Activated B cell treated with CpG ODN at 0.5 μM for 24 hours (primary cell): ENCODE measurements at regions of chr11 and their contacts with region 1.

Region 1: GRCh38 chr11:134253188-134253993 is at the starts of genes ACAD8 and THYN1:
- DNase-seq: peak; percentile 89
- ATAC-seq: peak; percentile 100
- H3K4me3 Mint-ChIP-seq: peak within 1 kb of the TSS; percentile 95
- H3K27ac Mint-ChIP-seq: peak within 1 kb of the TSS; percentile 77
- H3K4me1 Mint-ChIP-seq: peaks cover 22% of the 10 kb centered on the region
- H3K27me3 Mint-ChIP-seq: no peaks in the 10 kb centered on the region
- CTCF ChIP-seq: no peak
- total RNA-seq, gene ACAD8: 20.1 and 23.1 TPM in 2 replicates
- total RNA-seq, gene THYN1: 27.7 and 30.6 TPM in 2 replicates

Region 2: DNA sequence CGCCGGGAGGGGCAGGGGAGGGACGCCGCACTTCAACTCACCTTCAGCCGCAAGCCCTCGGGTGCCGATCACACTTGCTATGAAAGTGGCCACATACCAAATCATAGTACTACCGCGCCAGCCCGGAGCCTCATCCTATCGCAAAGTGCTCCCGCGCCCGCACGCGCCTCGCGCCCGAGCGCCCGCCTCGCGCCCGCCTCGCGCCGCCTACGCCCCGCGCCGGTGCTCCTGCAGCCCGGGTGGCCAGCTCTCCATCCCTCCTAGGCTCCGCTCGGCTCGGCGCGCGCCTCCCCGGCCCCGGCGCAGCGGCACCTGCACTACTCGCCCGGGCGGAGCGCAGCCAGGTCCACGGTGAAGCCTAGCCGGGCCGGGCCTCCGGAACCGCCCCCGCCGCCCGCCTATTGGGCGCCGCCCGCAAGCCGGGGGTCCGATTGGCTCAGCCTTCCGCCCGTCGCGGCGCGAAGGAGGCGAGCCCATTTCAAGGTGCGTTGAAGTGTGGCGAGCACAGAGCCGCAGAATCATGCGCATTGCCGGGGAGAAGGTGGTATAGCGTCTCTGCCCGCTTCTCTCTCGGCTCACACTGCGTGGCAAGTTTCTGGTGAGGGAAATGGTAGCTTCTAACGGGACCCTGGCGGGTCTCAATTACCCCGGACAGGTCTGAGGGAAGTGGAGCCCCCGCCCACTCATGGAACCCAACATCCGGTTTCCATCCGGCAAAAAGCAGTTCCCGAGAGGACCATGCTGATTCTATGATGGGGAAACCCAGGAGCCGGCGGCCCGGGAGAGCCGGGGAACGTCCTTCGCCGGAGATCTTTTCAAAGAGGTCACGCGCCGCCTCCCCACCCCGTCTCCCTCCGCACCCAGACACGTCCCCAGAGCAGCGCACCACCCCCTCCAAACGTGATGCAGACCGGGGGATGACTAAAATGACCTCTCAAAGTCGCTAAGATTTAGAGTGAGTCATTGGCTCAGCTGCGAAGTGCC is 296.4 kb before region 1 on chr11 and contains the start of gene IGSF9B:
- CTCF ChIA-PET with region 1: no interaction called
- POLR2A ChIA-PET with region 1: no interaction called
- intact Hi-C with region 1: loop called (anchors 1 kb)
- DNase-seq: peak; percentile 71
- ATAC-seq: peak; percentile 95
- H3K4me3 Mint-ChIP-seq: peak within 1 kb of the TSS; percentile 83
- H3K27ac Mint-ChIP-seq: peak within 1 kb of the TSS; percentile 30
- H3K4me1 Mint-ChIP-seq: peaks cover 17% of the 10 kb centered on the region
- H3K27me3 Mint-ChIP-seq: peaks cover 46% of the 10 kb centered on the region
- CTCF ChIP-seq: no peak
- total RNA-seq, gene IGSF9B: 0.83 and 2.0 TPM in 2 replicates

Region 3: GRCh38 chr11:134068829-134069425 is 184.5 kb before region 1 on chr11 and contains the start of gene JAM3:
- CTCF ChIA-PET with region 1: no interaction called
- POLR2A ChIA-PET with region 1: no interaction called
- intact Hi-C with region 1: loop called (anchors 1 kb)
- DNase-seq: peak; percentile 99
- ATAC-seq: peak; percentile 88
- H3K4me3 Mint-ChIP-seq: peak within 1 kb of the TSS; percentile 95
- H3K27ac Mint-ChIP-seq: peak within 1 kb of the TSS; percentile 90
- H3K4me1 Mint-ChIP-seq: peaks cover 42% of the 10 kb centered on the region
- H3K27me3 Mint-ChIP-seq: peaks cover 11% of the 10 kb centered on the region
- CTCF ChIP-seq: no peak
- total RNA-seq, gene JAM3: 16.2 and 17.6 TPM in 2 replicates

Region 4: DNA sequence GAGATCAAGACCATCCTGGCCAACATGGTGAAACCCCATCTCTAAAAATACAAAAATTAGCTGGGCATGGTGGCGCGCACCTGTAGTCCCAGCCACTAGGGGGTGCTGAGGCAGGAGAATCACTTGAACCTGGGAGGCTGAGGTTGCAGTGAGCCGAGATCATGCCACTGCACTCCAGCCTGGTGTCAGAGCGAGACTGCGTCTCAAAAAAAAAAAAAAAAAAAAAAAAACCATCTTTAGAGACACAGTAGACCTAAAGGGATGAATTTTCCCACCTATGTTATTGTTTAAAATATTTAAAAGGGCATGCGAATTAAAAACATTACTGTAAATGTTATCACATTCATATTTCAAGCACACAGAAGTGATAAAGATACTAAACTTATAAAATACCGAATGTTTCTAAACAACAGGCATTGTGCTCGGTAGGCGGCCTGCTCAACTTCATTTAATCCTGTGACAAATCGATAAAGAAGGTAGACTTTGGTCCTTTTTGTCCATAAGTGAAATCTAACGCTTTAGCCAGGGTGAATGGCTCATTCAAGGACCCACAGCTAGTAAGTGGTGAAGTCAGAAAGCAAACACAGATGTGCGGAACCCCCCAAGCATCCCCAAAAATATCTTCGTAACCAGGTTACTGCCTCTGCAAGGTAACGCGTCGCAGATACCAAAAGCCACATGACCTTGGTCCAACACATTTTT is 45.7 kb before region 1 on chr11:
- CTCF ChIA-PET with region 1: interaction called, 4 read pairs
- POLR2A ChIA-PET with region 1: no interaction called
- intact Hi-C with region 1: loop called (anchors 2 kb)
- DNase-seq: peak; percentile 40
- ATAC-seq: no peak
- H3K4me3 Mint-ChIP-seq: no peak overlapping the region
- H3K27ac Mint-ChIP-seq: no peak overlapping the region
- H3K4me1 Mint-ChIP-seq: no peaks in the 10 kb centered on the region
- H3K27me3 Mint-ChIP-seq: no peaks in the 10 kb centered on the region
- CTCF ChIP-seq: peak; percentile 39

Region 5: DNA sequence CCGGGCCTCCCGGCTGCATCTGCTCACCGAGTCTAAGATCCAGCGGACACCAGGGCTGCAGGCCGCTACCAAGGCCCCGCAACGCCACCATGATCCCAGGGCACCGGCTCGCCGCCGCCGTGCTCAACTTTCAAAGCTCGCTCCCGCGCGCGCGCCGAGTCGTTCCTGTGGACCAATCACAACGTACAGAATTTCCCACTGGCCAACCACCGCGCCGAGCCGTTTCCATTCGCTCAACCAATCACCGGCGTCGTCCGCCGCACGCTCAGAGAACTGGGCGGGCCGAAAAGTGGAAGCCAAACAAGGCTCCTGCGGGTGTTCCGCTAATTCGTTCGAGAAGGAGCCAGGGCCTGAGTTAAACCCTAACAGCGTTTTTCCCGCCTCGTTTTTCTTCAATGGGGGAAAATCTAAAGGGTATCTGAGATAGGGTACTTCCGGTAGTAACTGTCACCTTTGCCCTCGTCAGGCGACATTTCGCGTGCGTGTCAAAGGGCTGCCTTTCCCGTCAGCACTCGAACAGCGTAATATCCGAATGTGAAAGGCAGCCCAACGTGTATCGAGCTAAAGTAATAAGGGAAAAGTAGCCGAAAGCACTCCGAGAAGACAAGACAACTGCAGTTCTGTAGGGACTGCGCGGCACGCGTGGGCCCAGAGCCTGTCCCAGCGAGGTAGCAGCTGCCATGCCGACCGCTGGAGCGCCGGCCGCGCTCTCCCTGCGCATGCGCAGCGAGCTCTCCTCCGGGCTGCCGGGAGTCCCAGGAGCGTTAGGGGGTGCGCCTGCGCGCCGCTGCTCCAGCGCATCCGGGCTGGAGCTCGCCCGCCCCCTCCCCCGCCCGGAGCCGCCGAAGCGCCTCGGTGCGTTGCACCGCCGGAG is 29.3 kb before region 1 on chr11 and contains the starts of genes NCAPD3 and VPS26B:
- CTCF ChIA-PET with region 1: no interaction called
- POLR2A ChIA-PET with region 1: interaction called, 37 read pairs
- intact Hi-C with region 1: loop called (anchors 1 kb)
- DNase-seq: peak; percentile 89
- ATAC-seq: peak; percentile 80
- H3K4me3 Mint-ChIP-seq: peak within 1 kb of the TSS; percentile 93
- H3K27ac Mint-ChIP-seq: peak within 1 kb of the TSS; percentile 97
- H3K4me1 Mint-ChIP-seq: peaks cover 45% of the 10 kb centered on the region
- H3K27me3 Mint-ChIP-seq: peaks cover 7% of the 10 kb centered on the region
- CTCF ChIP-seq: no peak
- total RNA-seq, gene NCAPD3: 22.2 and 22.7 TPM in 2 replicates
- total RNA-seq, gene VPS26B: 8.9 and 11.4 TPM in 2 replicates

Region 6: DNA sequence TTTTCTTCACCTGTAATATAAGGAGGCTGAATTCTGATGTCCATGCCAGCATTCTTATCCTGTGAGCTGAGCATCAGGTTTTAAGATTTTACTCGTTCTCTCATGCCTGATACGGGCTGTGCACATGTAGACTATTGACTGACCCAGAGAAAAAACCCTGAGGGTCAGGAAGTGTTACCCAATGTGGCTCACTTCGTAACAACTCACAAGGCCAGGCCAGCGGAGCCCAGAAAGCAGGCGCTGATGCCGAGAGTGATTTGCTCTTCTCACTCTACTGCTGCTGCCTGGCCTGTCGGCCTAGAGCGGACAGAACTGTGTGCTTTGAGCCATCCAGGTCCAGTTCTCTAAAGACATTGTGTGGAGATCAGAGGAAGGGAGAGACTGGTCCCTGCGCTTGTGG is 11.0 kb before region 1 on chr11:
- CTCF ChIA-PET with region 1: no interaction called
- POLR2A ChIA-PET with region 1: no interaction called
- intact Hi-C with region 1: no loop called
- DNase-seq: no peak
- ATAC-seq: no peak
- H3K4me3 Mint-ChIP-seq: no peak overlapping the region
- H3K27ac Mint-ChIP-seq: no peak overlapping the region
- H3K4me1 Mint-ChIP-seq: no peaks in the 10 kb centered on the region
- H3K27me3 Mint-ChIP-seq: no peaks in the 10 kb centered on the region
- CTCF ChIP-seq: no peak

Region 7: DNA sequence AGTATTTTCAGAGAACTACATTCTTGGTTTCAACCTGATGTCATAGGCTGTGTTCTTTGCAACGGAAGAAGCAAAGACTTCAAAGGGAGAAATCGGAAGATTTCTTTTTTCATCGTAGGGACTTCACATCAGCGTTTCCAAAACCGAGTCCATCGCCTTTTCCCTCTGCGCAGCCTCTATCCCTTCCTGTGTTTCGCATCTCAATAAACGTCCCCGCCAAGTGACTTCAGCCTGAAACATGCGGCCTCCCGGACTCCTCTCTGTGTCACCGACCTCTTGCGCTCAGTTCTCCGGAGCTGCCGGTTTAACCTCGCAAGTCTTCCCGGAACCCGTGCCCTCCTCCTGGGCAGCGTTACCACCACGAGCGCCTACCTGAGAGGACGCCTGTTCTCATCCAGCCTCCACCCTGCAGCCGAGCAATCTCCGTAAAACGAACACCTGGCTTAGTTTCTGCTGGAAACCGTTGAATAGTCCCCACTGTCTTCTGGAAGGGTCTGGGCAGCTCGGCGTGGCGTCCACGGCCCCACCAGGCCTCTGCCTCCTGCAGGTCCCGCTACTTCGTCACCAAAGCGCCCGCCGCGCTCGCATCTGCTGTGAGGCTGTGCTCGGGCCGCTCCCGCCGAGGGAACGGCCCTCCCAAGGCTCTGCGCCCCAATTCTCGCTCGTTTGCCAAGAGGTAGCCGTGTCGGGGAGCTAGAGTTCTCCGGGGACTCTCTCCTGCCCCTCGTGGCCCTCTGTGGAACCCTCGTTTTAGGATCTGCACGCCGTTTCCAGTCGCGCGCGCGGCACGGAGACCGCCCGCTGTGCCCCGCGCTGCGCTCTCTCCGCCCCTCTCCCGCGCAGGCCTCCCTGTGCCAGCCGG is 22.4 kb after region 1 on chr11 and contains the start of gene GLB1L3:
- CTCF ChIA-PET with region 1: interaction called, 3 read pairs
- POLR2A ChIA-PET with region 1: interaction called, 4 read pairs
- intact Hi-C with region 1: loop called (anchors 2 kb)
- DNase-seq: peak; percentile 30
- ATAC-seq: peak; percentile 72
- H3K4me3 Mint-ChIP-seq: peak within 1 kb of the TSS; percentile 76
- H3K27ac Mint-ChIP-seq: no peak within 1 kb of the TSS
- H3K4me1 Mint-ChIP-seq: peaks cover 21% of the 10 kb centered on the region
- H3K27me3 Mint-ChIP-seq: peaks cover 71% of the 10 kb centered on the region
- CTCF ChIP-seq: no peak
- total RNA-seq, gene GLB1L3: not detected in 2 replicates

Region 8: GRCh38 chr11:134331354-134332188 is 78.2 kb after region 1 on chr11 and contains the start of gene GLB1L2:
- CTCF ChIA-PET with region 1: no interaction called
- POLR2A ChIA-PET with region 1: no interaction called
- intact Hi-C with region 1: loop called (anchors 1 kb)
- DNase-seq: peak; percentile 69
- ATAC-seq: peak; percentile 96
- H3K4me3 Mint-ChIP-seq: peak within 1 kb of the TSS; percentile 80
- H3K27ac Mint-ChIP-seq: no peak within 1 kb of the TSS
- H3K4me1 Mint-ChIP-seq: peaks cover 9% of the 10 kb centered on the region
- H3K27me3 Mint-ChIP-seq: peaks cover 48% of the 10 kb centered on the region
- CTCF ChIP-seq: no peak
- total RNA-seq, gene GLB1L2: 0.33 and 0.56 TPM in 2 replicates

Region 9: DNA sequence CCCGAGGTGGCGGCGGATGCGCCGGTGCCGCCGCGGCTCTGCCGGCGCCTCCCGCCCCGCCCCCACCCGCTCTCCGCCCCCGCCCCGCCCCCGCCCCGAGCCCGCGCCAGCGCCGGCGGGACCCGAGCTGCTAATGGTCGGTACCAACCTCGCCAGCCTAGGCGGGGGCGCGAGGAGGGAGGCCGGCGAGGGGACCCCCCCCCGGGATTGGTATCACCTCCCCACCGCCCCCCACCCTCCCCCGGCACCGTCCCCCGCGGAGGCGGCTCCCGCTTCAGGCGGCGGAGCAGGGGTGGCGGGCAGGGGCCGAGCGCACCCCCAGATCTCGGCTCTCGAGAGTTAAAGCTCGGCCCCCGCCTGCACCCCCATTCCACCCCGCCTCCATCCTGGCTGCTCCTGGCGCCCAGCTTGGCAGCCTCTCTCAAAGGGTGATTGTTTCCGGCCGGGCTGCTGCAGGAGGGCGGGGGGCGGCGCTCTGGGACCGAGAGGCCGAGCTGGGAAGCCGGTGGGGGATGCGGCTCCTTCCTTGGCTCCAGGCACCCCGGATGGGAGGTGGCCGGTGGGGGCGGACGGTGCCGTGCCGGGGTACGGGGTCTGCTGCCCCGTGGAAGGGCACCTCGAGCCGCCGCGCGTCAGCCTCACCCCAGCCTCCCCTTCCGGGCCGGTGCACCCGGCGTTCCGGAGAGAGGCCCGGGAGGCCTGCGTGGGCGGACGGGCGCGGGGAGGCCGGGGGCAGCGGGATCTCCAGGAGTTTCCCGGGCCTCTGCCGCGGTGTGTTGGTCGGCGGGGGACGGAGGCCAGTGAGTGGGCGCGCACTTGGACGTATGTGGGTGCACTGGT is 159.0 kb after region 1 on chr11 and contains the start of gene B3GAT1:
- CTCF ChIA-PET with region 1: no interaction called
- POLR2A ChIA-PET with region 1: no interaction called
- intact Hi-C with region 1: no loop called
- DNase-seq: no peak
- ATAC-seq: no peak
- H3K4me3 Mint-ChIP-seq: peak within 1 kb of the TSS; percentile 53
- H3K27ac Mint-ChIP-seq: no peak within 1 kb of the TSS
- H3K4me1 Mint-ChIP-seq: peaks cover 26% of the 10 kb centered on the region
- H3K27me3 Mint-ChIP-seq: peaks cover 49% of the 10 kb centered on the region
- CTCF ChIP-seq: no peak
- total RNA-seq, gene B3GAT1: not detected in 2 replicates